Upper lobe of right lung (tissue), 1 donor: ENCODE measurements at regions of chr19 and their contacts with region 1.

Region 1: DNA sequence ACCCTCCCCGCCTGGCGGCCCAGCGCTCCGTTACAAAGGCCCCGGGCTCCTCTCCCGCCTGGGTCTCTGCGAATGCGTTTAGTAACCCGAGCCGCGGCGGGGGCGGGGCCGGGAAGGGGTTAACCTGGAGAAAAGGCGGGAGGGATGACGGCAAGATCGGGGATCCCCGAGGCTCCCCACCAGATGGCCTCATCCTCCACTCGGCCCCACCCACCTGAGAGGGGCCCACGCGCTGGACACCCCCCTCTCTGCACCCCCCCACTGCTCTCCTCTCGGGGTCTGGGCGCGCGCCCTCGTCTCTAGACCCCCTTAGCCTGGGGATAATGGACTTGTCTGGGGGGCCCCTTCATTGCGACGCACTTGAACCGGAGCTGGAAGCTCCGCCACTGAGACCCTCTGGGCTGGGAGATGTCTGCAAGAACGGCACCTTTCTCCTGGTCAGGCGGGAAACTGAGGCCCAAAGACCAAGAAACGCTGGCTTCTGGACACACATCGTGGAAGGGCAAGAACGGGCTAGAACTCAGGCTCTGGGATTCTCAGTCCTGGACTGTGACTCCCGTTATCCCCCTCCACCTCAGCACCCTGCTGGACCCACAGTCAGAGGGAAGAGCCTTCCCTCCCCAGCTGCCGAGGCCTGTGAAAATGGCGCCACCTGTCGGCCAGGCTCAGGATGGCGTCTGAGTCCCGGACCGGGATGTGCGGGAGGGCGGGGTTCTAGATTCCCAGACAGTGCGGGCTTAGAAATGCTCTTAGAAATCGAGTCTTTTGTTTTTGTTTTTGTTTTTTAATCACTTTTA is 2.9 kb upstream of the LTBP4 start:
- DNase-seq: peak; percentile 92
- ATAC-seq: peak; percentile 82
- H3K4me3 ChIP-seq: no peak overlapping the region
- H3K27ac ChIP-seq: no peak overlapping the region
- H3K4me1 ChIP-seq: peaks cover 44% of the 10 kb centered on the region
- H3K27me3 ChIP-seq: peaks cover 51% of the 10 kb centered on the region
- CTCF ChIP-seq: peak; percentile 97

Region 2: DNA sequence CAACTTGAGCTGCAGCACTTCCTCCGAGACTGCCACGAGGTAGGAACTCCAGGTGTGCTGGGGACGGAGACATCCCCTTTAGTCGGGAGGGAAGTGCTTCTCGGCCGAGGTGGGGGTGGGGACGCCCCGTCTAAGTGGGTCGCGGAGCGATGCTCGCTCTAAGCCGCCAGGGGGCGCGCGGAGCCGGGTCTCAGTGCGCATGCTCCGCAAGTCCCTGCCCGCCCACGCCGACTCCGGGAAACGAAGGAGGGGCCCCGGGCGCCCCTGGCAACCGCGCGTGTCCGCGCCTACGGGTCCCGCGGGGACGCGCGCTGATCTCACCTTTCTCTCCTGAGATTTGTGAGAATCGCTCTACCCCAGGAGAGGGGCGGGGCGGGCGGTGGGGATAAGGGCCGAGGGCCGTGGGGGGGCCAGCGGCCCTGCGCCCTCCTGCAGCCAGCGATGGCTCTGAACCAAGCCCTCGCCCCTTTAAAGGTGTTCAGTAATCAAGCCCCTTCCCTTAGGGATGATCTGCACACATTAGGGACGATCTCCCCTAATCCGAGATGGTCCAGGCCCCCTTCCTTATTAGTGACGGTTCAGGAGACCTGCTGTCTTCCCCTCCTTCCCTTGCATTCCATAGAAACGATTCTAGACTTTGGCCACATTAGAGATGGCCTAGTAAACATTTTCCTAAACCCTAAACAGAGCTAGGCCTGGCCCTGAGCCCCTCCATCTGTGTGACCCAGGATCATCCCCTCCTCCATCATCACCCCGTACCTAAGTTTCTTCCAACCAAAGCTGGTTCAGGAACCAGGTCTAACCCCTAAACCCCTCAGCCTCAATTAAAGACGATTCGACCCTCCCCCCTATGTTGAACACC is 69.0 kb before region 1 on chr19:
- intact Hi-C with region 1: loop called (anchors 5 kb)
- DNase-seq: peak; percentile 93
- ATAC-seq: peak; percentile 95
- H3K4me3 ChIP-seq: peak overlapping the region; percentile 53
- H3K27ac ChIP-seq: peak overlapping the region; percentile 6
- H3K4me1 ChIP-seq: peaks cover 3% of the 10 kb centered on the region
- H3K27me3 ChIP-seq: no peaks in the 10 kb centered on the region
- CTCF ChIP-seq: peak; percentile 98

Region 3: DNA sequence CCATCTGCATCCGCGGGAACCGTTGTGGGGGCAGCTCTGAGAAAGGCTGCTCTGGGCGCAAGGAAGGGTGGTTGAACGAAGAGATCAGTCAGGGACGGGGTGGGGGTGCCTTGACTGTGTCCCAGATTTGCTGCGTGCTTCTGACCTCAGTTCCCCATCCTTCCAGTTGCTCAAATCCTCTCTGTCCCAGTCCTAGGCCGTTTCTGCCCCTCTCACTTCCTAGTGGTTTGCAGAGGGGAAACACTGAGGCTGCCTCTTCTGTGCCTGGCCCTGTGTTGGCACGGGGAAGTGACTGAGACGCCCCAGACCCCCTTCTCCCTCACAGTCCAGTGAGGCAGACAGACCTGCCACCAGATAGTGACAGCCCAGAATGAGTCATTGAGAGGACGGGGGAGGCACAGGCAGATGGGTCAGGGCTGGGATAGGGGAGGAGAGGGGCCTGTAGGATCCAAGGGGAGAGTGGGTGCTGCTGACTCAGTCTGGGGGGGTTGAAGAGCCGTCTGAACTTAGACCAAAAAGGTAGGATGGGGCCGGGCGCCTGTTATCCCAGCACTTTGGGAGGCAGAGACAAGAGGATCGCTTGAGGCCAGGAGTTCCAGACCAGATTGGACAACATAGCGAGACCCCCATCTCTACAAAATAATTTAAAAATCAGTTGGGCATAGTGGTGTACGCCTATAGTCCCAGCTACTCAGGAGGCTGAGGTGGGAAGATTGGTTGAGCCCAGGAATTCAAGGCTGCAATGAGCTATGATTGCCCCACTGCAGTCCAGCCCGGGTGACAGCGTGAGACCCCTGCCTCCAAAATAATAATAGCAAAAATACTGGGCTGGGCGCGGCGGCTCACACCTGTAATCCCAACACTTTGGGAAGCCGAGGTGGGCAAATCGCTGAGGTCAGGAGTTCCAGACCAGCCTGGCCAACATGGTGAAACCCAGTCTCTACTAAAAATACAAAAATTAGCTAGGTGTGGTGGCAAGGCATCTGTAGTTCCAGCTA is 65.7 kb after region 1 on chr19:
- intact Hi-C with region 1: no loop called
- DNase-seq: no peak
- ATAC-seq: no peak
- H3K4me3 ChIP-seq: peak overlapping the region; percentile 71
- H3K27ac ChIP-seq: peak overlapping the region; percentile 84
- H3K4me1 ChIP-seq: peaks cover 7% of the 10 kb centered on the region
- H3K27me3 ChIP-seq: no peaks in the 10 kb centered on the region
- CTCF ChIP-seq: no peak

Region 4: GRCh38 chr19:40690693-40691420 is 92.5 kb after region 1 on chr19:
- intact Hi-C with region 1: no loop called
- DNase-seq: peak; percentile 97
- ATAC-seq: peak; percentile 93
- H3K4me3 ChIP-seq: peak overlapping the region; percentile 59
- H3K27ac ChIP-seq: peak overlapping the region; percentile 86
- H3K4me1 ChIP-seq: peaks cover 17% of the 10 kb centered on the region
- H3K27me3 ChIP-seq: no peaks in the 10 kb centered on the region
- CTCF ChIP-seq: no peak